ENCODE measurements at regions of chr20 and their contacts with region 1.

Region 1: DNA sequence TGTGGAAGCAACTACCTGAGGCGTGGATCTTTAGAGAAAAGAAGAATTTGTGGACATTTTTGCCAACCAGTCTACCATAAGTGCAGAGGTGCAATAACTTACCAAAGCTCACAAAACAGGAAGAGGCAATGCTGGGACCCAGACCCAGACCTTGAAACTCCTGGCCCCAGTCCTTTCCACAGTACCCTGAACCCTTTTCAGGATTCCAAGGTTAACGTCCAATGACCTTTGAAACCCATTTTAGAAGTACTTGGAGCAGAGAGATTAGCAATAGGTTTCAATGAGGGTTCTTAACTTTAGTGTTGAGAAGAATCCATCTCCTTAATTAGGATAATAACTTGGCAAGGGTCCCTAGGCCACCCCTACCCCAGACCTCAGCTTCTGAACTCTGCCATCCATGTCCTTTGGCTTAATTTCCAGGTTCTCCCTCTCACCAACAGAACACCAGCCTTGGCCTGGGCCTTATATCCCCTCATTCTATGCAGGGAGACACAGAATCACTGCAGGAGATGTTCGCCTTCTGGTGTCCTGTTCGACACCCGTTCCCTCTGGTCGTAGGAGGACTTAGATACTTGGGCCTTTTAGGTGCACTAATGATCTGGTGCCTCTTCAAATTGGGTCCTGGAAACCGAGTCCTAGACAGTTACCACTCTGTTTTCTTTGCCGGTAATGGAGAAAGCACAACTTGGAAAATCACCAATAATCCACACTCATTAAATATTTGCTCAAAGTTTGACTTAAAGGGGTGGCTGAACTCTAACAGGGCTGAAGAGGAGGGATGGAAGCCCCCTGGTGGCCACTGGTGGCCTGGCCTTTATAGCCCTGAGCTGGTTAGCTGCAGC is 40.6 kb downstream of the ISM1 start:
- DNase-seq: peak; percentile 48 to 83 (median 78)
- H3K4me3 ChIP-seq: no peak overlapping the region
- H3K27ac ChIP-seq: no peak overlapping the region
- H3K4me1 ChIP-seq: peaks cover 0 to 19% (median 0%) of the 10 kb centered on the region in 4 experiments
- H3K27me3 ChIP-seq: peaks cover 0 to 4% (median 0%) of the 10 kb centered on the region in 5 experiments

Region 2: GRCh38 chr20:13119583-13119982 is 142.1 kb before region 1 on chr20:
- CTCF ChIA-PET with region 1: interaction called, 25 read pairs
- POLR2A ChIA-PET with region 1: no interaction called
- DNase-seq: peak; percentile 44 to 81 (median 75)
- H3K4me3 ChIP-seq: no peak overlapping the region
- H3K27ac ChIP-seq: no peak overlapping the region
- H3K4me1 ChIP-seq: no peaks in the 10 kb centered on the region
- H3K27me3 ChIP-seq: peaks cover 0 to 16% (median 0%) of the 10 kb centered on the region in 5 experiments

Region 3: DNA sequence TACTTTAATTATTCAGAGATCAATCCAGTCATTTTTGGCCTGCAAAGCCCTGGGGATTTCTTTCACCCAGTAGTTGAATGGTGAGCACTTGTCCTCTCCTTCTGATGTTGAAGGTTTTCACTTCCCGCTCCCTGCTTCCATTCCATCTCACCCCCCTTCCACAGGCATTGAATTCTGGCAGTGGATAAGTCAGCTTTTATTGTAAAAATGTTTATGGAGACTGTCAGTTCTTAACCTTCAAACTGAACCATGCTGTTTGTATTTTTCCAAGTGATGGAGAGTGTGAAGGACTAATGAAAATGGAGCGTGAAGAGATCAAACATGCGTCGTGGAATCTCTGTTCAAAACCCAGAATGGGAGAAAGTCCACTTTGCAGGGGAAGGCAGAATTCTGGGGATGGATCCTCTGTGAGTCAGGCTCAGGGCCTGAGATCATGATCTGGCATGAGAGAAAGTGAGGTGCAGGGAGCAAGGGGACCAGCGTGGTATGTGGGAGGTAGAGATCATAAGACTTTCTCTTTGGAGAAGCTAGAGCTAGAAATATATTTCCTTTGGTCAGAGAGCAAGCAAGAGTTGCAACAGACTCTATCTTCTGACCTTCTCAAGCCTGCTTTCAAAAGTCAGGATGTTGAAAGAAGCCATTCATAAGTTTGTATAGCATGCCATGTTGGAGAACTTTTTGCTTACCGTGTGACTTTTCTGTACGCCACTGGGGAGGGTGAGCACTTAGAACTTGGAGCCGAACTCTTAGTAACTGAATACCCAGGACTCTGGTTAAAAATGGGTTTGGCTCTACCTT is 10.4 kb before region 1 on chr20:
- CTCF ChIA-PET with region 1: interaction called, 41 read pairs
- POLR2A ChIA-PET with region 1: no interaction called
- DNase-seq: no peak
- H3K4me3 ChIP-seq: no peak overlapping the region
- H3K27ac ChIP-seq: no peak overlapping the region
- H3K4me1 ChIP-seq: peaks cover 7 to 39% (median 10%) of the 10 kb centered on the region in 4 experiments
- H3K27me3 ChIP-seq: peaks cover 0 to 3% (median 0%) of the 10 kb centered on the region in 5 experiments

Region 4: GRCh38 chr20:13271977-13272975 is 10.6 kb after region 1 on chr20:
- CTCF ChIA-PET with region 1: interaction called, 10 read pairs
- POLR2A ChIA-PET with region 1: no interaction called
- DNase-seq: no peak
- H3K4me3 ChIP-seq: no peak overlapping the region
- H3K27ac ChIP-seq: no peak overlapping the region
- H3K4me1 ChIP-seq: peaks cover 0 to 2% (median under 1%) of the 10 kb centered on the region in 4 experiments
- H3K27me3 ChIP-seq: peaks cover 0 to 3% (median 0%) of the 10 kb centered on the region in 5 experiments

Region 5: DNA sequence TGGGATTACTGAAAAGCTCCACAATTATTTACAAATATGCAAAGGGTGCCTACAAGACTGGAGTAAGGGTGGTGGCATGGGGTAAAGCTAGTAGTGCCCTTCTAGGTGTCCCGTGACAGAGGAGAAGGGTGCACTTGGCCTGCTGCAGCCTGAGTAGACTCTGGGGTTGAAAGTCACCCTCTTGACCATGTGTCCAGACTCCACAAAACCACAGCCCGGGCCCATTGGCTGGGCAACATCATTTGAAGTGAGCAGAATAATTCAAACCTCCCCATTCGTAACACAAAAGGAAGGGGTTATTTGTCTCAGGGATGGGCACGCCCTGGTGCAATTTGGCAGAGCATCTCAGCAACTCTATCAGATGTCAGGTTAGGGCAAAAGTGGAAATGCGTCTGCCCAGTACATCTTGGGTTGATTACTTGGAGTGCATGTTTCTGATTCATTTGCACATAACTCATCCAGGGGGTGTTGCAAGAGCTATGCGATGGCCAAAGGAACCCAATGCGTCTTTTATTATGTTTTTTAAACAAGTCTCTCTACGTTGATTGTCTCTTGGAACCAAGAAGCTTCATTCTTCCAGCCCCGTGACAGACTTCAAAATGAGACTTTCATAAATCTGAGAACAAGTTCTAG is 16.1 kb after region 1 on chr20:
- CTCF ChIA-PET with region 1: interaction called, 10 read pairs
- POLR2A ChIA-PET with region 1: no interaction called
- DNase-seq: no peak
- H3K4me3 ChIP-seq: no peak overlapping the region
- H3K27ac ChIP-seq: no peak overlapping the region
- H3K4me1 ChIP-seq: peaks cover 0 to 2% (median under 1%) of the 10 kb centered on the region in 4 experiments
- H3K27me3 ChIP-seq: peaks cover 0 to under 1% (median 0%) of the 10 kb centered on the region in 5 experiments

Region 6: DNA sequence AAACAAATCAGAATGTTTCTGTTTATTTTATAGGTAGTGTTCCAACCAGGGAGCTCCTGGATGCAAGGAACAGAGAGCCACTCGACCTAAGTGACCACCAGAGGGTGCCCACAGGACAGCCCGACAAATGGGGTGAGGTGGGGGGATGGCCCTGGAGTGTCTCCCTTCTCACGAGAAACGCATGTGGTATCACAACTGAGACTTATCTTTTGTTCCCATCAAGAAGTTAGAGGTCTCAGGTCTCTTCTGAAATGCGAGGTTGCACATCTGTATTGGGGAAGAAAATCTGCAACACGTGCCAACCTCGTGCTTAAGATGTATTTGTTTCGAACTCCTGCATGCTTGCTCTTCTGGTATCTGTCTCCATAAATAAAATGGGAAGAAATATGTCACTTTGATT is 63.4 kb after region 1 on chr20:
- CTCF ChIA-PET with region 1: no interaction called
- POLR2A ChIA-PET with region 1: no interaction called
- DNase-seq: peak; percentile 1 to 13 (median 9)
- H3K4me3 ChIP-seq: no peak overlapping the region
- H3K27ac ChIP-seq: no peak overlapping the region
- H3K4me1 ChIP-seq: peaks cover 0 to 2% (median 0%) of the 10 kb centered on the region in 4 experiments
- H3K27me3 ChIP-seq: peaks cover 0 to 11% (median 6%) of the 10 kb centered on the region in 5 experiments

Region 7: DNA sequence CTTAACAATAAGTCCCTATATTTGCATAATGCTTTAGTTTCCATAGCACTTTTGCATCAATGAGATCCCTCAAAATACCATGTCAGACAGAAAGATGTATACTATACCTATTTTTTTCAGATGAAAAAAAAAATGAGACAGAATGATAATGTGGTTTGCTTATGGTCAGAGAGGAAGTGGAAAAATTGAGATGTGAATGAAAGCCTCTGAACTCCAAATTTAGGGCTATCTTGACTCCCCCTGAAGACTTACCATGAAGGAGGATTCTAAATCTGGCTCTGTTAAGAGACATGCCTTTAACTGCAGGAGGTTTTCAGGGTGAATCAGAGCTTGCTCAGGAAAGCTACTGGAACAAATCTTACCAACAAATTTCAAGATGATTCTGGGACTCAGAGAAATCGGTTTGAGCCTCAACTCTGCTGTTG is 135.6 kb after region 1 on chr20:
- CTCF ChIA-PET with region 1: no interaction called
- POLR2A ChIA-PET with region 1: no interaction called
- DNase-seq: no peak
- H3K4me3 ChIP-seq: no peak overlapping the region
- H3K27ac ChIP-seq: no peak overlapping the region
- H3K4me1 ChIP-seq: no peaks in the 10 kb centered on the region
- H3K27me3 ChIP-seq: no peaks in the 10 kb centered on the region

Measured in common myeloid progenitor, CD34-positive (primary cell).